ENCODE measurements at regions of chr19 and their contacts with region 1.

Region 1: DNA sequence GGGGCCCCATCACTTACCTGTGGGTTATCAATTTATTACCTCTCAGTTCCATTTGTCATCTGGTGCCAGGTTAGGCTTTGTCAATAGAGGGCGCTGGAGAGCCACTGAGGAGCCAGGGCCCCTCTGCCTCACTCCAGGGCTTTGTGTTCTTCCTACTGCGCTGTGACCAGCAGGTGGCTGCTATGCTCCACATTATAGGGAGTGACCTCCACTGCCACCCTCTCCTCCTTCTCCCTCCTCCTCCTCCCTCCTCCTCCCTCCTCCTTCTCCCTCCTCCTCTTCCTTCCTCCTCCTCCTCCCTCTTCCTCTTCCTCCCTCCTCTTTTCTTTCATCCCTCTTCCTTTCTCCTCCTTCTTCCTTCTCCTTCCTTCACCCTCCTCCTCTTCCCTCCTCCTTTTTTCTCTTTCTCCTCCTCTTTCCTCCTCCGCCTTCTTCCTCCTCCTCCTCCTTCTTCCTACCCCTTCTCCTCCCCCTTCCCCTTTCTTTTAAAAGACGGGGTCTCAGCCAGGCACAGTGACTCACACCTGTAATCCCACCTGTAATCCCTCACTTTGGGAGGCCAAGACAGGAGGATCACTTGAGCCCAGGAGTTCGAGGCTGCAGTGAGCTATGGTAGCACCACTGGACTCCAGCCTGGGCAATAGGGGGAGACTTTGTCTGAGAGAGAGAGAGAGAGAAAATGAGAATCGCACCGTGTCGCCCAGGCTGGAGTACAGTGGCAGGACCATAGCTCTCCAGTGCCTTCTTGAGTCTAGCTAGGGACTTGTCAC is 10.3 kb upstream of the ZBTB32 start:
- DNase-seq: peak; percentile 79
- ATAC-seq: peak; percentile 95
- H3K4me3 ChIP-seq: no peak overlapping the region
- H3K27ac ChIP-seq: peak overlapping the region; percentile 43; the same call in 1 of the 2 replicates
- H3K4me1 ChIP-seq: peaks cover 18% of the 10 kb centered on the region
- H3K27me3 ChIP-seq: no peaks in the 10 kb centered on the region
- CTCF ChIP-seq: peak; percentile 99
- EP300 ChIP-seq: no peak
- POLR2A ChIP-seq: no peak
- RAD21 ChIP-seq: peak; percentile 99

Region 2: GRCh38 chr19:35710784-35711723 is 17.0 kb after region 1 on chr19:
- CTCF ChIA-PET with region 1: interaction called, 271 read pairs
- POLR2A ChIA-PET with region 1: interaction called, 516 read pairs
- RAD21 ChIA-PET with region 1: interaction called, 430 read pairs
- SMC1A ChIA-PET with region 1: interaction called, 375 read pairs
- in situ Hi-C with region 1: no loop called
- intact Hi-C with region 1: no loop called
- DNase-seq: peak; percentile 94
- ATAC-seq: peak; percentile 56
- H3K4me3 ChIP-seq: peak overlapping the region; percentile 43
- H3K27ac ChIP-seq: peak overlapping the region; percentile 95
- H3K4me1 ChIP-seq: peaks cover 43% of the 10 kb centered on the region
- H3K27me3 ChIP-seq: no peaks in the 10 kb centered on the region
- CTCF ChIP-seq: no peak
- EP300 ChIP-seq: peak; percentile 70 to 92
- POLR2A ChIP-seq: peak; percentile 69
- RAD21 ChIP-seq: no peak

Region 3: DNA sequence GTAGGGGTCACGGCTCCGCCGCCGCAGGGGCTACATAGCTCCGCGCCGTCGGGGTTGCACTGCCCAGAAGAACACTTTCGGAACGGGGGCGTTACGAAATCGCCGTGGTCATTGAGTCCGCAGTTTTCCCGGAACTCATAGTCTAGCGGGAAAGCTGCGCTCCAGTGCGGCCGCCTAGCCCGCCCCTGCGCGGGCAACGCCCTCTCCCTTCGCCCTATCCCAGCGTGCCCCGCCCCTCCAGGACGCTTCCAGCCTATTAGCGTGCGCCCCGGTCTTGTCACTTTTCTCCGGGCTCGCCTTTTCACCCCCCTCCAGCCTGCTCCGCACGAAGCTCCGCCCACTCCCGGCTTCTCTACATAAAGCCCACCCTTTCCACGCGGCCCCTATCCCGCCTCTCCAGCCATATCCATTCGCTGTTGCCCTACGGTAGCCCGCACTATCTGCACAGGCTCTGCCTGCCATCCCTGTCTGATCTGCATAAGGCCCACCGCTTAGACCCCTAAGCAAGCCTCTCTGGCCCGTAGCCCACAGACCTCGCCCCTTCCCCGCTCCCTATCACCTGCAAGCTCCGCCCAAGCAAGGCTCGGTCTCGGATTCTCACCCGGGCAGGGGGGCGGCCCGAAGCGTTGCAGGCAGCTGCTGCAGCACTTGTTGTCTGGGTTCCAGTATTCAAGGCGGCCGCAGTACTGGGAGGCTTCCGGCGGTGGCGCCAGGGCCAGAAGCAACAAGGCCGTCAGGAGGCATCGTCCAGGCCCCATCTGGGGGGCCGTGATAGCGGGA is 46.6 kb after region 1 on chr19:
- CTCF ChIA-PET with region 1: interaction called, 18 read pairs
- POLR2A ChIA-PET with region 1: interaction called, 11 read pairs
- RAD21 ChIA-PET with region 1: interaction called, 18 read pairs
- SMC1A ChIA-PET with region 1: interaction called, 14 read pairs
- in situ Hi-C with region 1: no loop called
- intact Hi-C with region 1: loop called (anchors 2 kb)
- DNase-seq: peak; percentile 86
- ATAC-seq: peak; percentile 78
- H3K4me3 ChIP-seq: peak overlapping the region; percentile 83
- H3K27ac ChIP-seq: peak overlapping the region; percentile 99
- H3K4me1 ChIP-seq: peaks cover 26% of the 10 kb centered on the region
- H3K27me3 ChIP-seq: no peaks in the 10 kb centered on the region
- CTCF ChIP-seq: peak in 2 of 3 experiments; percentile 24 to 30; a peak in 4 of 6 replicates
- EP300 ChIP-seq: no peak
- POLR2A ChIP-seq: peak; percentile 84
- RAD21 ChIP-seq: peak; percentile 7; the same call in 1 of the 2 replicates

Region 4: DNA sequence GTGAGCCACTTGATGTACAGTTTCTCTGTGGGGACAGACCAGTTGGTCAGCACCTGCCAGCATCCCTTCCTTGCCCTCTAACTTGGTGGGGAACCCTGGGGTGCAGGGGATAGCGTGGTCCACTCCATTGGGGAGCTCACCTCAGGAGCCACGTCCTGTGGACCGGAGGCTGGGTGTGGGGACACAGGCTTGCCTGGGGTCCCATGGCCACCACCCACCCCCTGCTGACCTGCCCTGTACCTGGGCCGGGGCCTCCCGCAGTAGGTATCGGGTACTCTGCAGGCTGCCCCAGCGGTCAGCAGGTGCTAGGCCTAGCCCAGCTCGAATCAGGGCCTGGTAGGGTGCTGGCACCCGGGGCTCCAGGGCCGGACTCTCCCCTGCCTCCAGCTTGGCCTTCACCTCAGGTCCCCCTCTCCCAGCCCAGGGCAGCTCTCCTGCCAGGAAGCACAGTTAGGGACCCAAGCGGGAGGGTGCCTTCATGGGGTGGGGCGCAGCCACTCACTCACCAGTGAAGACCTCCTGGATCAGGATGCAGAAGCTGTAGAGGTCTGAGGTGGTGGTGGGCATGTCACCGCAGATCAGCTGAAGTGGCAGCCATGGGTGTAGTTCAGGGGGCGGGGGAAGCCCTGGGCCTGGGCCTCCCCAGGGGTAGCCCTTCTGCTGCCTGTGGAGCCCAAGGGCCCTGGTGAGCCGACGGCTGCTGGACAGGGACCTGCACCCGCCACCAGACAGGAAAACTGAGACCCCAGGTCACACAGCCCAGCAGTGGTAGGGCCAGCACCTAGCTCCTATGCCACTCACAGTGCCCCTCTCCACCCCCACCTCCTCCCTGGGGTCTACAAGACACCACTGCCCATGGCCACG is 96.3 kb after region 1 on chr19:
- CTCF ChIA-PET with region 1: interaction called, 12 read pairs
- POLR2A ChIA-PET with region 1: interaction called, 3 read pairs
- RAD21 ChIA-PET with region 1: interaction called, 3 read pairs
- SMC1A ChIA-PET with region 1: no interaction called
- in situ Hi-C with region 1: no loop called
- intact Hi-C with region 1: no loop called
- DNase-seq: no peak
- ATAC-seq: no peak
- H3K4me3 ChIP-seq: no peak overlapping the region
- H3K27ac ChIP-seq: no peak overlapping the region
- H3K4me1 ChIP-seq: no peaks in the 10 kb centered on the region
- H3K27me3 ChIP-seq: no peaks in the 10 kb centered on the region; a peak in 1 of 4 replicates
- CTCF ChIP-seq: no peak
- EP300 ChIP-seq: no peak
- POLR2A ChIP-seq: no peak
- RAD21 ChIP-seq: no peak

Region 5: DNA sequence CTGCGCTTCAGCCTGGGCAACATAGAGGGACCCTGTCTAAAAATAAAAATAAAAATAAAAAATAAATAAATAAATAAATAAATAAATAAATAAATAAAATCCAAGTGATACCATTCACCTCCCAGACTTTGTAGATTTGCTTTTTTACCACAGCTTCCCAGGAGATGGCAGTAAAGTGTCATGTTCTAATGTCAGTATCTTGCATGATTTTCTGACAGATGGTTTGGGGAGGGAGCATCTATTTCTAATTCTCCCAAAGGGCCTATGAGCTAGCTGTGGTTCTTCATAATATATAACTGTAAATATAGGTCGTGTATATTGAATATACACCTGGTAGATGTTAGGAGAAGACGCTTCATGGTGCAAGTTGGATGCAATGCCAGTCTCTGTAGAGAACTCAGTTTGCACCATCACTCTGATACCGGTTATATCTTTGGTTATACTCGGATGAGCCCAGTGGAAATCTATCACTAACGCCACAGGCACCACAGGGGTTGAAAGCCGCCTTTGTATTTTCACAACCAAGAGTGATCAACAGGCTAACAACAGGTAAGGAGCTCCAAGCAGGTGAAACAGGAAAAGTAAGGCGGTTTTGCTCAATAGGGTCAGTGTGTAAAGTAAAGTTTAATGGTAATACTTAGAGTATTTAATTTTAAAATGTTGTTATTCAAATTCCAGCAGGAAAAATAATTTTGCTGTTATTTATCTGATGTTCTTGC is 188.3 kb after region 1 on chr19:
- CTCF ChIA-PET with region 1: interaction called, 18 read pairs
- POLR2A ChIA-PET with region 1: interaction called, 5 read pairs
- RAD21 ChIA-PET with region 1: interaction called, 3 read pairs
- SMC1A ChIA-PET with region 1: interaction called, 10 read pairs
- in situ Hi-C with region 1: no loop called
- intact Hi-C with region 1: loop called (anchors 5 kb)
- DNase-seq: peak; percentile 33
- ATAC-seq: peak; percentile 55
- H3K4me3 ChIP-seq: no peak overlapping the region
- H3K27ac ChIP-seq: no peak overlapping the region
- H3K4me1 ChIP-seq: no peaks in the 10 kb centered on the region
- H3K27me3 ChIP-seq: no peaks in the 10 kb centered on the region
- CTCF ChIP-seq: peak; percentile 41 to 72 (median 54); a peak in 5 of 6 replicates
- EP300 ChIP-seq: no peak
- POLR2A ChIP-seq: no peak
- RAD21 ChIP-seq: peak; percentile 95

Measured in GM12878 (cell line).